ENCODE measurements at regions of chr11 and their contacts with region 1.

Region 1: GRCh38 chr11:82978422-82979099 is 77.0 kb downstream of the DDIAS start:
- DNase-seq: no peak
- H3K4me3 Mint-ChIP-seq: no peak overlapping the region
- H3K27ac Mint-ChIP-seq: peak overlapping the region; percentile 16
- H3K4me1 Mint-ChIP-seq: peaks cover 38% of the 10 kb centered on the region
- H3K27me3 Mint-ChIP-seq: no peaks in the 10 kb centered on the region

Region 2: GRCh38 chr11:82927254-82927880 is 51.2 kb before region 1 on chr11:
- CTCF ChIA-PET with region 1: interaction called, 3 read pairs
- POLR2A ChIA-PET with region 1: no interaction called
- intact Hi-C with region 1: loop called (anchors 2 kb)
- DNase-seq: no peak
- H3K4me3 Mint-ChIP-seq: no peak overlapping the region
- H3K27ac Mint-ChIP-seq: no peak overlapping the region
- H3K4me1 Mint-ChIP-seq: peaks cover 14% of the 10 kb centered on the region
- H3K27me3 Mint-ChIP-seq: no peaks in the 10 kb centered on the region

Region 3: GRCh38 chr11:82959987-82960778 is 18.4 kb before region 1 on chr11:
- CTCF ChIA-PET with region 1: no interaction called
- POLR2A ChIA-PET with region 1: interaction called, 3 read pairs
- intact Hi-C with region 1: loop called (anchors 1 kb)
- DNase-seq: peak; percentile 33
- H3K4me3 Mint-ChIP-seq: peak overlapping the region; percentile 4
- H3K27ac Mint-ChIP-seq: peak overlapping the region; percentile 67
- H3K4me1 Mint-ChIP-seq: peaks cover 65% of the 10 kb centered on the region
- H3K27me3 Mint-ChIP-seq: no peaks in the 10 kb centered on the region

Region 4: DNA sequence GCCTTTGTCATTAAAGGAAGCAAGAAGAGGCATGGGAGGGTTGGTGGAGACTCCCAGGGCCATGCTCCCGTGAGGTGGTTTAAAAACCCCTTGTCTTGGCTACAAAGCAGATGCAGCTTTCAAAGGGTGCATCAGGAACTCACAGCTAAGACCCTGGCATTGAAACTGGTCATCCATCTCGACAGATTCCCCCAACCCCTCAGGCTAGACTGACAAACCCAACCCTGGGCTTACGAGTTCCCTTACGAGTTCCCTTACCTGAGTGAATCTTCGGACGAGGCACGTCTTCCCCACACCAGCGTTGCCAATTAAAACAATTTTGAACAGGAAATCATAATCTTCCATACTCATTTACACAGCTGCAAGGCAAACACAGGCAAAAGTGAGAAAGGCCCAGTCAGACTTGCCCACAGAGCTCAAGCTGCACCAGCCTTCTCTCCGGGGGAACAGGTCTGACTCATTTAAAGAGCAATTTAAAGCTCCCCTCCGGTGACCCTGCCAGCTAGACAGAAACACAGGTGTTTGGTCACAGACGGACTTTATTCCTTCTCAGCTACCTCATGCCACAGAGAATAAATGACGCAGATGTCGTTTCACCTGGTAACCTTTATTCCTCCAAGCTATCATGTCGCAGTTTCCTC is 18.5 kb after region 1 on chr11:
- CTCF ChIA-PET with region 1: interaction called, 3 read pairs
- POLR2A ChIA-PET with region 1: interaction called, 11 read pairs
- intact Hi-C with region 1: loop called (anchors 1 kb)
- DNase-seq: peak; percentile 67
- H3K4me3 Mint-ChIP-seq: no peak overlapping the region
- H3K27ac Mint-ChIP-seq: peak overlapping the region; percentile 43
- H3K4me1 Mint-ChIP-seq: peaks cover 60% of the 10 kb centered on the region
- H3K27me3 Mint-ChIP-seq: no peaks in the 10 kb centered on the region

Region 5: GRCh38 chr11:83063073-83063754 is 84.7 kb after region 1 on chr11:
- CTCF ChIA-PET with region 1: no interaction called
- POLR2A ChIA-PET with region 1: interaction called, 5 read pairs
- intact Hi-C with region 1: loop called (anchors 1 kb)
- DNase-seq: peak; percentile 28
- H3K4me3 Mint-ChIP-seq: peak overlapping the region; percentile 71
- H3K27ac Mint-ChIP-seq: peak overlapping the region; percentile 93
- H3K4me1 Mint-ChIP-seq: peaks cover 44% of the 10 kb centered on the region
- H3K27me3 Mint-ChIP-seq: no peaks in the 10 kb centered on the region